Endothelial cell of umbilical vein (primary cell): ENCODE measurements at regions of chr17 and their contacts with region 1.

Region 1: DNA sequence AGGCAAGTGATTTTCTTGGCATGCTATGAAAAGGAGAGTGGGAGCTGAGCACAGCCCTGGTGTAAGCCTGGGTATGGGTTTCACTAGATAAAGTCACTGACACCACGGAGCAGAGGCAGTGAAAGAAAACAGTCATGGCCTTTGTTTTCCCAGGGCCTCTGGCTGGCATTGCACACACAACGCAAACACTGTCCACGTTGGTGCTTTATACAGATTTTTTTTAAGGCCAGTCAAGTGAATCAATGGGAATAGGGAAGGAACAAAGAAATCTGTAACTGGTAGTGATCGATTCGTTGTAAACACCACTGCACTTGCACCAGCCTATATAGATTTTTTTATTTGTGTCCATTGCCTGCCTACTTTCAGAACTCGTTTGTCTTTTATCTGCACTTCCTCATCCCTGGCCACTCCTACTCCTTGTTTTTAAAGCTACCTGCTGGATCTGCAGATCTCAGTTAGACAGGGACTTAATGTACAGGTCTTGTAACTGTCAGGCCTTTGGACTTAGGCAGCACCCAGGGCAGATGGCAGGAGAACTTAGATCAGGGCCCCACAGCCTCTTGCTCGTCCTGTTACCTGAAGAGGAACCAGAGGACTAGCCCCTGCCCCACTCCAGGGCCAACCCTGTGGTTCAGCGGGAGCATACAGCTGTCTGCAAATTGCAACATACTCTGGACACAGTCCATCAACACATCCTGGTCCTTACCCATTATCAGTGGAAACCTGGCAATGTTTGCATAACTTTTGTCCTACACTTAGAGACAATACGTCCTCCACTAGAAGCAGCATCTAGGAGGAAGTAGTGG is 10.6 kb upstream of the TMIGD1 start:
- DNase-seq: peak; percentile 68
- H3K4me3 ChIP-seq: no peak overlapping the region
- H3K27ac ChIP-seq: no peak overlapping the region
- H3K4me1 ChIP-seq: peaks cover 26% of the 10 kb centered on the region
- H3K27me3 ChIP-seq: no peaks in the 10 kb centered on the region
- CTCF ChIP-seq: no peak
- POLR2A ChIP-seq: no peak

Region 2: DNA sequence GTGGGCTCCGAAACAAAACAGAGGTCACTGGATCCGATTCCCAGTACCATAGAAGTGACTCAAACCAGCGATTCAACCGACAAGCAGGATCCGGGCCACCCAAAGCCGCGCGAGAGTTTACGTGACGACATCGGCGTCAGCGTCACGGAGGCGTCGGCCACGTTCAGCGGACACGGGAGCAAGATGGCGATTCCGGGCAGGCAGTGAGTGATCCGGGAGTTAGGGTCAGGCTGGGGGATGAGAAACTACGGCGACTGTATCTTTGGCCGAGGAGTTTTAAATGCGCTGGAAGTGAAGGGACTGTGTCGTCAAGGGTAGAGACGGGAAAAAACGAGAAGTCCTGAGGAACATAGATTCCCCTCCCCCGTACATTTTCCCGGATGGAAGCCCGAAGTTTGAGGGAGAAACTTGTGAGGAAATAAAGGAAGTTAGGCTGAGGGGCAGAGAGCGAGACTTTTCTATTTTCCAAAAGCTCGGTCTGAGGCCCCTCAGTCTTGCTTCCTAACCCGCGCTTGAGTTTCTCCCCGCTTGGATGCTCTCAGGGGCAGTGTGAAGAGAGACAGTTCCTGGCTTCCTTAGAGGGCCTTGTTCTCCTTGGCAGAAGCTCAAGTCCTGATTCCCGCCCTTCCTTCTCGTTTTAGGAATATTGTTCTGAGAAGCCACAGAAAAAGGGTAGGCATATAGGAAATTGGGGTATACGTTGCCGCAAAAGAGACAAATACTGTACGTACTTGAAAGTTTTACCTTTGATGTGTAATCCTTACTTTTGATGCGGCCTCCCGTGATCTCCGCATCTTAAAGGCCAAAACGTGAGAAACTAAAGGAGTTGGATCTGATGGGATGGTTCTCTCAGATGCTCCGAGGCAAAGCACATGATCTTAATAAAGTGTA is 227.6 kb before region 1 on chr17 and contains the start of gene NSRP1:
- CTCF ChIA-PET with region 1: no interaction called
- POLR2A ChIA-PET with region 1: no interaction called
- dilution Hi-C with region 1: no loop called
- intact Hi-C with region 1: loop called (anchors 2 kb)
- DNase-seq: peak; percentile 97
- H3K4me3 ChIP-seq: peak within 1 kb of the TSS; percentile 61 to 92 (median 81)
- H3K27ac ChIP-seq: peak within 1 kb of the TSS; percentile 96
- H3K4me1 ChIP-seq: peaks cover 14% of the 10 kb centered on the region
- H3K27me3 ChIP-seq: no peaks in the 10 kb centered on the region
- CTCF ChIP-seq: no peak
- POLR2A ChIP-seq: peak; percentile 94
- total RNA-seq, gene NSRP1: 28.4 and 29.1 TPM in 2 replicates

Region 3: DNA sequence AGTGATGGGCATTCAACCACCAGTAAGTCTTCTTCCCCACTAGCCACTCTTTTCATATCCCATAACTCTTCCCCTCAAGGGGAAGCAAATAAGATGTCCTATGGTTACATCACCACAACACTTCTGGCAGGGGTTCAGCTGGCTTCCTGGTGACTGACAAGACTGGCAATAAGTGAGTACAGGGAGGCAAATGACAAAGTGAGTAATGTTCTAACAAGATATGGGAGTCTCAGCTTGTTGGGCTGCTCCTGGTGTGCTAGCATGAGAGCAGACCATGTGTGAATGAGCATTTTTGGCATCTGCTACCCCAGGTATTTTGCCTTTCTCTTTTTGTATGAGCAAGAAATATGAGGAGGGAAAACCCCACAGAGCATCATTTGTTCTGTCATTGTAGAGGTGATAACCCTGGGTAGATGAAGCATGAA is 20.6 kb before region 1 on chr17:
- CTCF ChIA-PET with region 1: interaction called, 21 read pairs
- POLR2A ChIA-PET with region 1: no interaction called
- dilution Hi-C with region 1: no loop called
- intact Hi-C with region 1: no loop called
- DNase-seq: peak; percentile 40
- H3K4me3 ChIP-seq: no peak overlapping the region
- H3K27ac ChIP-seq: no peak overlapping the region
- H3K4me1 ChIP-seq: no peaks in the 10 kb centered on the region
- H3K27me3 ChIP-seq: peaks cover 0 to 2% of the 10 kb centered on the region in 2 experiments
- CTCF ChIP-seq: no peak
- POLR2A ChIP-seq: no peak

Region 4: GRCh38 chr17:30433514-30433913 is 89.0 kb after region 1 on chr17:
- CTCF ChIA-PET with region 1: interaction called, 10 read pairs
- POLR2A ChIA-PET with region 1: no interaction called
- dilution Hi-C with region 1: no loop called
- intact Hi-C with region 1: no loop called
- DNase-seq: peak; percentile 98
- H3K4me3 ChIP-seq: no peak overlapping the region
- H3K27ac ChIP-seq: peak overlapping the region; percentile 4
- H3K4me1 ChIP-seq: peaks cover 13% of the 10 kb centered on the region
- H3K27me3 ChIP-seq: no peaks in the 10 kb centered on the region
- CTCF ChIP-seq: no peak
- POLR2A ChIP-seq: no peak

Region 5: GRCh38 chr17:30716461-30717300 is 372.2 kb after region 1 on chr17:
- CTCF ChIA-PET with region 1: interaction called, 6 read pairs
- POLR2A ChIA-PET with region 1: no interaction called
- dilution Hi-C with region 1: no loop called
- intact Hi-C with region 1: loop called (anchors 5 kb)
- DNase-seq: no peak
- H3K4me3 ChIP-seq: no peak overlapping the region
- H3K27ac ChIP-seq: no peak overlapping the region
- H3K4me1 ChIP-seq: no peaks in the 10 kb centered on the region
- H3K27me3 ChIP-seq: no peaks in the 10 kb centered on the region
- CTCF ChIP-seq: no peak
- POLR2A ChIP-seq: no peak